Caco-2 (cell line): ENCODE measurements at regions of chr5 and their contacts with region 1.

Region 1: GRCh38 chr5:173887610-173888472 is at the start of gene CPEB4:
- DNase-seq: peak; percentile 98 to 99
- H3K4me3 ChIP-seq: peak within 1 kb of the TSS; percentile 66
- H3K4me3 Mint-ChIP-seq: peak within 1 kb of the TSS; percentile 78
- H3K27ac Mint-ChIP-seq: peak within 1 kb of the TSS; percentile 98
- H3K4me1 ChIP-seq: peaks cover 37% of the 10 kb centered on the region
- H3K4me1 Mint-ChIP-seq: peaks cover 41% of the 10 kb centered on the region
- H3K27me3 ChIP-seq: no peaks in the 10 kb centered on the region
- H3K27me3 Mint-ChIP-seq: no peaks in the 10 kb centered on the region
- CTCF ChIP-seq: no peak
- total RNA-seq, gene CPEB4: 21.4 and 25.1 TPM in 2 replicates

Region 2: GRCh38 chr5:173615884-173616576 is 271.8 kb before region 1 on chr5:
- CTCF ChIA-PET with region 1: interaction called, 7 read pairs
- POLR2A ChIA-PET with region 1: interaction called, 10 read pairs
- intact Hi-C with region 1: loop called (anchors 1 kb)
- DNase-seq: peak; percentile 75 to 84
- H3K4me3 ChIP-seq: peak overlapping the region; percentile 90
- H3K4me3 Mint-ChIP-seq: peak overlapping the region; percentile 89
- H3K27ac Mint-ChIP-seq: peak overlapping the region; percentile 94
- H3K4me1 ChIP-seq: peaks cover 20% of the 10 kb centered on the region
- H3K4me1 Mint-ChIP-seq: peaks cover 23% of the 10 kb centered on the region
- H3K27me3 ChIP-seq: no peaks in the 10 kb centered on the region
- H3K27me3 Mint-ChIP-seq: no peaks in the 10 kb centered on the region
- CTCF ChIP-seq: peak; percentile 61 to 64

Region 3: GRCh38 chr5:173764321-173765029 is 123.4 kb before region 1 on chr5:
- CTCF ChIA-PET with region 1: no interaction called
- POLR2A ChIA-PET with region 1: interaction called, 21 read pairs
- intact Hi-C with region 1: loop called (anchors 1 kb)
- DNase-seq: peak; percentile 42 to 70
- H3K4me3 ChIP-seq: no peak overlapping the region
- H3K4me3 Mint-ChIP-seq: no peak overlapping the region
- H3K27ac Mint-ChIP-seq: no peak overlapping the region
- H3K4me1 ChIP-seq: peaks cover 40% of the 10 kb centered on the region
- H3K4me1 Mint-ChIP-seq: peaks cover 20% of the 10 kb centered on the region
- H3K27me3 ChIP-seq: no peaks in the 10 kb centered on the region
- H3K27me3 Mint-ChIP-seq: no peaks in the 10 kb centered on the region
- CTCF ChIP-seq: no peak

Region 4: DNA sequence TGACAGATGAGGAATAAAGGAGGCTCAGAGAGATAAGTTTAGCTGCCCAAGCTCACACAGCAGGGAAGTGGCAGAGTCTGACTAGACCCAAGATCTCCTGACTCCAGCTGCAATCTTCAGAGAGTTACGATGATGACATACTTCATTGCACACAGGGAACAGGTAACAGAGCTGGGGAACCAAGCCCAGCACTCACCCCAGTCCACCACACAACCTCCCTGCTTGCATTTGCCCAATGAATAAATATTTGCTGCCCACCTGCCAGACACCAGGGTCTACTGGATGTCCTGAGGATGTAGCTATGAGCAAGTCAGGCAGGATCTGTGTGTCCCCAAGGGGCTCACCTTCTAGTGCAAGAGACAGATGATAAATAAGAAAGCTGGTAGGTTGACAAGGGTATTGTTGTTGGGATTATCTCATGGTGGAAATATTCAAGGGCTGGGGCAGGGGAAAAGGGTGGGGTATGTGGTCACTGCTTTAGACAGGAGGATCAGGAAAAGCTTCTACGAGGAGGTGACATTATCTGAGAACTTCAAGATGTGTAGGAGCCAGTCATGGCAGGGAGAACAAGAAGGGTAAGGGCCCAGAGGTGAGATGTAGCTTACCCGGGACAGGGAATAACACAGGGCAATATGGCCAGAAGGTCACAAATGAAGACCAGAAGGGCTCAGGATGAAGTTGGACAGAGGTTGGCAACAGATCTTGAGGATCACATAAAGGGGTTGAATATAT is 28.2 kb before region 1 on chr5:
- CTCF ChIA-PET with region 1: interaction called, 4 read pairs
- POLR2A ChIA-PET with region 1: no interaction called
- intact Hi-C with region 1: loop called (anchors 1 kb)
- DNase-seq: no peak
- H3K4me3 ChIP-seq: no peak overlapping the region
- H3K4me3 Mint-ChIP-seq: peak overlapping the region; percentile 6
- H3K27ac Mint-ChIP-seq: peak overlapping the region; percentile 17
- H3K4me1 ChIP-seq: peaks cover 67% of the 10 kb centered on the region
- H3K4me1 Mint-ChIP-seq: peaks cover 38% of the 10 kb centered on the region
- H3K27me3 ChIP-seq: no peaks in the 10 kb centered on the region
- H3K27me3 Mint-ChIP-seq: no peaks in the 10 kb centered on the region
- CTCF ChIP-seq: no peak

Region 5: DNA sequence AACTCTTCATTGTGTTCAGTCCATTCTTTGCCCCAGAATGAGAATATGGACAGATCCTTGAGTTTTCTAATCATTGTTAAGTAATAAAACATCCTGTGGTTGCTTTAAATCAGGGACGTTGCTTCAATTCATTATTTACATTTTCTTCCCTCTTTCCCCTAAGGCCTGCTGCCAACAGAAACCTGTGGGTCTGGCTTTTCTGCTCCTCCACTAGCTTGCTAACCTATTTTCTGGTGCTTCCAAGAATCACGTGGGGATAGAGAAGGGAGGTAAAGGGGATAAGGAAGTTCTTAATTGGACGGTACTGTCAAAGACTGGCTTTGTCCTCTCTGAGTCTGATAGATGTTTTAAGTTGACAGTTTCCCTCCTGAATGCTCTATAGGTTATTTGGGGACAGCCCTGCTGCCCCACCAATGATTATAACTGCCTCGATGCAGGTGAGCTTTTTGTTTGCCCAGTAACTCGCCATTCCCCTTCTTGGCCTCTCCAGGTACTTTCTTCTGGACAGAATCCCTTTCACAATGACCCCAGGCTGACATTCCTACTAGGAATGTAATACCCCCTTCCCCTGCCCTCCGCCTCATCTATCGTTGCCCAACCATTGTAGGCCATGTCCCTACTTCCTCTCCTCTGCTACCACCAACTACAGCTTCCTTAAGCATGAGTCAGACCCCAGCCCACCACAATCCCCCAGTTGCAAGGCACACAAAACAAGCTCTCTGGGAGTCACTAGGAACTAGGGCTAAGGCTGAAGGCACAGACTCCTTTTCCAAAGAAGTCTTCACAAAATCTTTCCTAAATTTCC is 19.6 kb before region 1 on chr5:
- CTCF ChIA-PET with region 1: interaction called, 3 read pairs
- POLR2A ChIA-PET with region 1: interaction called, 5 read pairs
- intact Hi-C with region 1: loop called (anchors 1 kb)
- DNase-seq: peak in 1 of 2 experiments; percentile 40
- H3K4me3 ChIP-seq: no peak overlapping the region
- H3K4me3 Mint-ChIP-seq: no peak overlapping the region
- H3K27ac Mint-ChIP-seq: peak overlapping the region; percentile 65
- H3K4me1 ChIP-seq: peaks cover 19% of the 10 kb centered on the region
- H3K4me1 Mint-ChIP-seq: peaks cover 44% of the 10 kb centered on the region
- H3K27me3 ChIP-seq: no peaks in the 10 kb centered on the region
- H3K27me3 Mint-ChIP-seq: no peaks in the 10 kb centered on the region
- CTCF ChIP-seq: no peak

Region 6: DNA sequence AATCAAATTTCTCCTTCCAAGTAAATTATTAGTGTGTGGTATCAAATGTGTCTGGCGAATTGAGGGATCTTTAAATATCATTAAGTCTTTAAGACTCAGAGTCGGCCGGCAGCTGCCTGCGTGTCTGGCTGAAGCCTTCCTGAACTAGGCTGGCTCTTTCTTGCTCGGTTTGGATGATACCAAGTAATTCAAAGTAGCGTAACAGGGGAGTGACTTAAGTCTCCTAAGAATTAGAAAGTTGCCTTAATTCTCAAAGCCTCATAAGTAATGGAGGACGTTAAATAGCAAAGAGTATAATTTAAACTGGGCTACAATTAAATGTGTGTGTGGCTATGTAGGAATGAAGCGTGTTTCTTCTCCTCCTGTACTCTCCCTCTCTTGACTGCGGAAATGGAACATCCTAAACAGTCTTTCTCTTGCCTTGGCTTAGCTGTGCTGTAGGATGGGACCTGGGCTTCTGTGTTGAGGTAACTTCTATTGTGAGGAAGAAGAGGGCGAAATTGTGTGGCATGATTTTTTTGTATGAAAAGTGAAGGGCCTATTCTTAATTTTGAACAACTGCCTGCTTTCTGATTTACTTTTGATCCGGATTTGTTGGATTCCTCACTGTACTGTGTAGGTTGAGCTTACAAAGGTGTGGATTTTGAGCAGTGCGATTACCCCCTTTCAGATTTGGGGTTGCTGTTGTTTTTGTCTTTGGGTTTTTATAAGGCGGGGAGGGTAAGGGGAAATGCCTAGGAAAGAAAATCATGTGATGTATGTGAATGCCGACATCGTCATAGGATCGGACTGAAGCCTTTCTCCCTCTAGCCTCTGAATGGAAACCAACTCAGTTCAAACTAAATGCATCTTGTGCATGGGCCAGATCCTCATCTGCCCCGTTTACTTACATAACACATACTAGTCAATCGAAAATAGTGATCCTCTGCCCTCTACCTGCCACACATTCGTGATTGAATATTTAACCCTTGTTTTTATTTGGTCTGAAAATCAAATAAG is 30.2 kb after region 1 on chr5:
- CTCF ChIA-PET with region 1: no interaction called
- POLR2A ChIA-PET with region 1: interaction called, 8 read pairs
- intact Hi-C with region 1: loop called (anchors 2 kb)
- DNase-seq: peak; percentile 68 to 74
- H3K4me3 ChIP-seq: peak overlapping the region; percentile 31
- H3K4me3 Mint-ChIP-seq: no peak overlapping the region
- H3K27ac Mint-ChIP-seq: no peak overlapping the region
- H3K4me1 ChIP-seq: peaks cover 12% of the 10 kb centered on the region
- H3K4me1 Mint-ChIP-seq: no peaks in the 10 kb centered on the region
- H3K27me3 ChIP-seq: no peaks in the 10 kb centered on the region
- H3K27me3 Mint-ChIP-seq: no peaks in the 10 kb centered on the region
- CTCF ChIP-seq: no peak

Region 7: GRCh38 chr5:173972925-173973615 is 85.2 kb after region 1 on chr5:
- CTCF ChIA-PET with region 1: interaction called, 9 read pairs
- POLR2A ChIA-PET with region 1: interaction called, 19 read pairs
- intact Hi-C with region 1: loop called (anchors 1 kb)
- DNase-seq: peak; percentile 87 to 89
- H3K4me3 ChIP-seq: peak overlapping the region; percentile 42
- H3K4me3 Mint-ChIP-seq: peak overlapping the region; percentile 74
- H3K27ac Mint-ChIP-seq: peak overlapping the region; percentile 80
- H3K4me1 ChIP-seq: peaks cover 56% of the 10 kb centered on the region
- H3K4me1 Mint-ChIP-seq: peaks cover 28% of the 10 kb centered on the region
- H3K27me3 ChIP-seq: no peaks in the 10 kb centered on the region
- H3K27me3 Mint-ChIP-seq: no peaks in the 10 kb centered on the region
- CTCF ChIP-seq: peak; percentile 88 to 89

Region 8: GRCh38 chr5:174453696-174454095 is 565.9 kb after region 1 on chr5:
- CTCF ChIA-PET with region 1: no interaction called
- POLR2A ChIA-PET with region 1: no interaction called
- intact Hi-C with region 1: no loop called
- DNase-seq: no peak
- H3K4me3 ChIP-seq: no peak overlapping the region
- H3K4me3 Mint-ChIP-seq: peak overlapping the region; percentile 28
- H3K27ac Mint-ChIP-seq: peak overlapping the region; percentile 62
- H3K4me1 ChIP-seq: peaks cover 47% of the 10 kb centered on the region
- H3K4me1 Mint-ChIP-seq: peaks cover 41% of the 10 kb centered on the region
- H3K27me3 ChIP-seq: no peaks in the 10 kb centered on the region
- H3K27me3 Mint-ChIP-seq: no peaks in the 10 kb centered on the region
- CTCF ChIP-seq: no peak